Heart left ventricle (tissue), 16 donors: ENCODE measurements at regions of chr2 and their contacts with region 1.

Region 1: GRCh38 chr2:37168217-37168981 is 11.6 kb upstream of the EIF2AK2 start:
- DNase-seq: no peak
- ATAC-seq: peak in 3 of 4 donors; percentile 59 to 83 (median 66)
- H3K4me3 ChIP-seq: no peak overlapping the region
- H3K27ac ChIP-seq: no peak overlapping the region
- H3K4me1 ChIP-seq: no peaks in the 10 kb centered on the region
- H3K27me3 ChIP-seq: no peaks in the 10 kb centered on the region
- CTCF ChIP-seq: peak; percentile 48 to 74 (median 65)
- POLR2A ChIP-seq: no peak

Region 2: GRCh38 chr2:36762764-36763490 is 405.5 kb before region 1 on chr2:
- intact Hi-C with region 1: no loop called
- DNase-seq: no peak
- ATAC-seq: no peak
- H3K4me3 ChIP-seq: no peak overlapping the region
- H3K27ac ChIP-seq: no peak overlapping the region
- H3K4me1 ChIP-seq: no peaks in the 10 kb centered on the region
- H3K27me3 ChIP-seq: peaks cover 0 to 5% (median 0%) of the 10 kb centered on the region in 9 donors
- CTCF ChIP-seq: no peak
- POLR2A ChIP-seq: no peak

Region 3: DNA sequence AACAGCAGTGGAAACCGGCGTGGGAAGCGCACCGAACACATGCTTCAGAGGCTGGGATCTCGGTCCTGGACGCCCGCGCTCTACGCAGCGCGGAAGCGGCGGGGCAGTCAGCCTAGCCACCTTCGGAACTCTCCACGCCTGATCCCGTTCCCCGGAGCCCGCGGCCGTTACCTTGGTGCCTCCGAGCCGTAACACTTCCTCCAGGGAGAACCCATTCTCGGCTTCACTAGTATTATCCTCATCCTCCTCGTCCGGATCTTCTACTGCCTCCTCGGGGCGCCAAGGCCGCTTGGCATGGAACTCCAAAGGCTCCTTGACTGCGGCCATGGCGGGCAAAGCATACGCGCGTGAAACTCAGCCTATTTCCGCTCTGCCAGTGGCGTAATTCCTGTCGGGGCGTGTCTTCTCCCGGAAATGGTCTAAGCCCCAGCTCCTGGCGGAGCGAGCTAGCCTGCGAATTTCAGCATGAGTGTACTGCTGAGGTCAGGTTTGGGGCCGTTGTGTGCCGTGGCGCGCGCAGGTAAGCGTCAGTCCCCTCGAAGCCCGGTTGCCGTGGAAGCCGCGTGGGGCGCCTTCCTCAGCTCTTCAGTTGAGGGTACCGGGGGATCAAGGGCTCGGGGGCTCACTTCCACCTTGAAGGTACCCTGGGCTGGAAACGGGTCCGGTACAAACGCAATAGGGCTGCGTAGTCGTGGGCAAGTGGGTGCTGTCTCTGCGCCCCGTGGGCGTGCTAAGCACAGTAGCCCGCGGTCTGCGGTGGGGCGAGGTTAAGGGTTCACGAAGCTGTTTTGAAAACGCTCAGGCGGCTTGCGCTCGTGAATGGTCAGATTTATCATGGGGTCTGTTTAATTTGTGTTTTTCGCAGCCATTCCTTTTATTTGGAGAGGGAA is 63.1 kb after region 1 on chr2 and contains the starts of genes CEBPZ and NDUFAF7:
- intact Hi-C with region 1: no loop called
- DNase-seq: peak; percentile 90 to 94 (median 92)
- ATAC-seq: peak; percentile 95 to 99 (median 98)
- H3K4me3 ChIP-seq: peak within 1 kb of the TSS; percentile 64 to 94 (median 86)
- H3K27ac ChIP-seq: peak within 1 kb of the TSS; percentile 83 to 96 (median 91)
- H3K4me1 ChIP-seq: peaks cover 9 to 42% (median 33%) of the 10 kb centered on the region in 12 donors
- H3K27me3 ChIP-seq: no peaks in the 10 kb centered on the region
- CTCF ChIP-seq: no peak
- POLR2A ChIP-seq: peak in 1 of 2 donors; percentile 68
- total RNA-seq, gene CEBPZ: 17.4 to 31.5 (median 25.3) TPM
- total RNA-seq, gene NDUFAF7: 15.8 to 33.0 (median 22.2) TPM

Region 4: DNA sequence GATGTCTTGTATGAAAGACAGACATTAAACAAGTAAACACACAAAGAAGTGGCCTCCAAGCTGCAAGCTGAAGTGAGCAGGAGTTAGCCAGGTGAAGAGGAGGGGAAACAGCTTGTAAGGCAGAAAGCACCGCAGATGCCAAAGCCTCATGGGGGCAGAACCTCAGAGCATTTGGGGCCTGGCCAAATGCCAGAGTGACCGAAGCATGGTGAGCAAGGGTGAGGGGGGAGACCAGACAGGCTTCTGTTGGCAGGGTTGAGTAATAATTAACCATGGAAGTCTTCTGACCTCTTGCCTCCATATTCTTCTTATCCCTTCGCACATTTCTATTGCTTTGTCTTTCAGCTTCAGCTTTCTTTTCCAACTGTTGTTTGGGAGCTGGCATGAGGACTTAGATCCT is 181.6 kb after region 1 on chr2:
- intact Hi-C with region 1: loop called in 1 of 10 experiments (anchors 10 kb)
- DNase-seq: no peak
- ATAC-seq: no peak
- H3K4me3 ChIP-seq: no peak overlapping the region
- H3K27ac ChIP-seq: no peak overlapping the region
- H3K4me1 ChIP-seq: peaks cover 0 to 24% (median 1%) of the 10 kb centered on the region in 12 donors
- H3K27me3 ChIP-seq: no peaks in the 10 kb centered on the region
- CTCF ChIP-seq: no peak
- POLR2A ChIP-seq: no peak